A673 (cell line): ENCODE measurements at regions of chr6 and their contacts with region 1.

Region 1: DNA sequence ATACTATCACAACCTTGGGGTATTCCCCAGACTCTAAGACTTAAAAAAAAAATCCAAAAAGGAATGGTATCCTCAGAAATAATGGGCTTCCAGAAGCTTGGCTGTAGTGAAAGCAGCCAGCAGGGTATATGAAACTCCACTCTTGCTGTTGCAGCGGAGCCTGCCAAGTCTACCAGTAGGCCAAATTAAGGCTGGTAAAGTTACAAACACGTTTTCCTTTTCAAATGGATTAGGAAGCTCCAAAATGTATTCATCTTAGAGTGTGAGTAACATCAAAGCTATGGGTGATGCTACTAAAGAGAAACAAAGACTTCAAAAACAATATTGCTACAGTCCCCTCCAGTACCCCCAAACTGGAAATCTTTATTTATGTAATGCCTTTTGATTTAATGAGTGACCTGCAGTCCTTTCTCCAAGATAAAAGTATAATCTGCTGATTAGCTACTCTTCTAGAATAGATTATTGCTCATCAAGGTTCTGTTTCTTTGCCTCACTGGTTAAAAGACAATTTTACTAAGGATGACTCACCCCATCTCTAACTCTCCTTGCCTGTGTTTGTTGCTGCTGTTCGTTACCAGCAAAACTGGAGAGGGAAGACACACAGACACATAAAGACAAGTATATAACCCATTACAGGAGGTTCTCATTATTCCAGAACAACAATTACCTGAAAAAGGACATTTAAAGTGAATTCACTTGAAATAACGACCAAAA is 84.9 kb downstream of the BTBD9 start:
- DNase-seq: peak; percentile 17
- H3K4me3 ChIP-seq: no peak overlapping the region
- H3K27ac ChIP-seq: no peak overlapping the region
- H3K4me1 ChIP-seq: no peaks in the 10 kb centered on the region
- H3K27me3 ChIP-seq: no peaks in the 10 kb centered on the region
- CTCF ChIP-seq: no peak

Region 2: GRCh38 chr6:38100380-38100779 is 454.5 kb before region 1 on chr6:
- CTCF ChIA-PET with region 1: interaction called, 13 read pairs
- POLR2A ChIA-PET with region 1: no interaction called
- intact Hi-C with region 1: no loop called
- DNase-seq: no peak
- H3K4me3 ChIP-seq: no peak overlapping the region
- H3K27ac ChIP-seq: no peak overlapping the region
- H3K4me1 ChIP-seq: no peaks in the 10 kb centered on the region
- H3K27me3 ChIP-seq: no peaks in the 10 kb centered on the region
- CTCF ChIP-seq: no peak